Astrocyte of the spinal cord (primary cell): ENCODE measurements at regions of chr21 and their contacts with region 1.

Region 1: DNA sequence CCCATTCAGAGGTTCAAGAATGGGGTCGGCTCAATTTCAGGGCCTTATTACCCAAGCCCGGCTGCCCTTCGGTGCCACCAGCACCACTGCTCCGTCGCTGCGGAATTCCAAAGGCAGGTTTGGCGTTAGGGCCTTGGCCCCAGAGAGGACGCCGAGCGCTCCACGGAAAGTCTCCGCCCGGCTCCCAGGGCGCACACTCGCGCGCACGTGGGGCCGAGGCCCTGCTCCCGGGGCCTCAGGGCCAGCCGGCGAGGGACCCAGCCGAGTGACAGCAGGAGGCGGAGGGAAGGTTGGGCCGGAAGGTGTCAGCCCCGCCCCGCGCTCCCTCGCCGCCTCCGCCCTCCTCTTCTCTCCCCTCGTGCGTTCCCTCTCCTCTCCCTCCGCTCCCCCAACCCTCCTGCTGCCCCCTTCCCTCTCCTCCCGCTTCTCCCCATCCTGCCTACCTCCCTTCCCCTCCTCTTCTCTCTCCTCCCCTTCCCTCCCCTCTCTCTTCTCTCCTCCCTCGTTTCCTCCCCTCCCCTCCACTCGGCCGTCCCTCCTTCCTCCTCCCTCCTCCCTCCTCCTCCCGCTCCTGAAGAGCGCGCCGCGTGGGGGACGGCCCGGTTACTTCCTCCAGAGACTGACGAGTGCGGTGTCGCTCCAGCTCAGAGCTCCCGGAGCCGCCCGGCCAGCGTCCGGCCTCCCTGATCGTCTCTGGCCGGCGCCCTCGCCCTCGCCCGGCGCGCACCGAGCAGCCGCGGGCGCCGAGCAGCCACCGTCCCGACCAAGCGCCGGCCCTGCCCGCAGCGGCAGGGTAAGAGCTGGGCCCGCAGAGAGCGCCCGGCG is at the start of gene ETS2:
- DNase-seq: peak; percentile 93
- H3K4me3 ChIP-seq: peak within 1 kb of the TSS; percentile 76
- CTCF ChIP-seq: no peak

Region 2: GRCh38 chr21:38869946-38870345 is 64.4 kb after region 1 on chr21:
- in situ Hi-C with region 1: no loop called
- DNase-seq: peak; percentile 59
- H3K4me3 ChIP-seq: no peak overlapping the region
- CTCF ChIP-seq: peak; percentile 7

Region 3: DNA sequence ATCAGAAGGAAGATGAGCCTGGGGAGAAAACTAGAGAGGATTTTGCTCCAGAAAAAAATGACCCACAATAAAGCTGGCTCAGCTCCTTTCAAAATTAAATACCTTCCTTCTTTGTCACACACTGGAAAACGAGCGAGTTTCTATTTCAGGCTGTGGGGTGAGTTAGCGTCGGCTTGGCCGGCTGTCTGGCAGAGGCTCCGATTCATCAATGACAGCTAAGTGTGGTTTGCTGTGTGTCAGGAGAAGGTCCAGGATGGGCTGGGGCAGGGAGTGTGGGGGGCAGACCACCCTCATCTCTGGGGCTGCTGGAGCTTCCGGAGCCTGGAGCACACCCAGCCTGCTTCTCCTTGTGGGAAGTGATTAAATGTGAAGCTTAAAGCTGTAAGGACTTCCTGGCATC is 120.4 kb after region 1 on chr21:
- in situ Hi-C with region 1: loop called (anchors 25 kb)
- DNase-seq: peak; percentile 94
- H3K4me3 ChIP-seq: no peak overlapping the region
- CTCF ChIP-seq: no peak